B cell (primary cell): ENCODE measurements at regions of chr4 and their contacts with region 1.

Region 1: GRCh38 chr4:55546756-55547465 is at the start of gene CLOCK:
- DNase-seq: peak; percentile 94
- ATAC-seq: peak; percentile 75
- H3K4me3 ChIP-seq: peak within 1 kb of the TSS; percentile 67 to 95 (median 79)
- H3K4me3 Mint-ChIP-seq: peak within 1 kb of the TSS; percentile 97
- H3K27ac ChIP-seq: peak within 1 kb of the TSS; percentile 59 to 84
- H3K27ac Mint-ChIP-seq: peak within 1 kb of the TSS; percentile 96
- H3K4me1 ChIP-seq: peaks cover 6 to 9% of the 10 kb centered on the region in 2 donors
- H3K4me1 Mint-ChIP-seq: peaks cover 31% of the 10 kb centered on the region
- H3K27me3 ChIP-seq: no peaks in the 10 kb centered on the region
- H3K27me3 Mint-ChIP-seq: peaks cover 6% of the 10 kb centered on the region
- CTCF ChIP-seq: peak; percentile 58
- total RNA-seq, gene CLOCK: 14.2 and 15.2 TPM in 2 replicates

Region 2: GRCh38 chr4:54754394-54754793 is 792.5 kb before region 1 on chr4:
- CTCF ChIA-PET with region 1: no interaction called
- POLR2A ChIA-PET with region 1: no interaction called
- intact Hi-C with region 1: no loop called
- DNase-seq: no peak
- ATAC-seq: no peak
- H3K4me3 ChIP-seq: no peak overlapping the region
- H3K4me3 Mint-ChIP-seq: no peak overlapping the region
- H3K27ac ChIP-seq: no peak overlapping the region
- H3K27ac Mint-ChIP-seq: no peak overlapping the region
- H3K4me1 ChIP-seq: no peaks in the 10 kb centered on the region
- H3K4me1 Mint-ChIP-seq: no peaks in the 10 kb centered on the region
- H3K27me3 ChIP-seq: no peaks in the 10 kb centered on the region
- H3K27me3 Mint-ChIP-seq: peaks cover 6% of the 10 kb centered on the region
- CTCF ChIP-seq: no peak

Region 3: GRCh38 chr4:55345980-55346850 is 200.7 kb before region 1 on chr4 and contains the start of gene SRD5A3:
- CTCF ChIA-PET with region 1: interaction called, 7 read pairs
- POLR2A ChIA-PET with region 1: interaction called, 9 read pairs
- intact Hi-C with region 1: loop called (anchors 1 kb)
- DNase-seq: peak; percentile 85
- ATAC-seq: peak; percentile 89
- H3K4me3 ChIP-seq: peak within 1 kb of the TSS; percentile 56 to 84 (median 73)
- H3K4me3 Mint-ChIP-seq: peak within 1 kb of the TSS; percentile 85
- H3K27ac ChIP-seq: peak within 1 kb of the TSS; percentile 69 to 85
- H3K27ac Mint-ChIP-seq: peak within 1 kb of the TSS; percentile 94
- H3K4me1 ChIP-seq: peaks cover 4 to 9% of the 10 kb centered on the region in 2 donors
- H3K4me1 Mint-ChIP-seq: peaks cover 10% of the 10 kb centered on the region
- H3K27me3 ChIP-seq: no peaks in the 10 kb centered on the region
- H3K27me3 Mint-ChIP-seq: no peaks in the 10 kb centered on the region
- CTCF ChIP-seq: peak; percentile 99
- total RNA-seq, gene SRD5A3: 3.6 and 4.0 TPM in 2 replicates

Region 4: DNA sequence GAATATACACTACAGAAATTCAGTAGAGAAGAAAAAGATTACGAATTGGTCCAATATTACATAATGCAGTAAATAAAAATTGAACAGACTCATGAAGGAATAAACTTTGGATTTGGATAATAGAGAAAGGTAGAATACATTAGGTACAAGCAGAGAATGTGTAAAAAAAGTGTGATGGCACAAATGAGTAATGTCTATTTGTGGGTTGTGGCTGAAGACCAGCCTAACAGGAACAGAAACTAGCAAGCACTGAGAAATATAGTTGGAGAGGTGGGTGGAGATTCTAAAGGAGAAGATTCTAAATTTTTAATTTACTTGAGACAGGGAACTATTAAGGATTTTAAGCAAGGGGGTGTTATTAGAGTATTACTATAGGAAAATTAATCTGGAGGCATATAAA is 15.0 kb after region 1 on chr4:
- CTCF ChIA-PET with region 1: interaction called, 4 read pairs
- POLR2A ChIA-PET with region 1: no interaction called
- intact Hi-C with region 1: loop called (anchors 1 kb)
- DNase-seq: peak; percentile 66
- ATAC-seq: peak; percentile 95
- H3K4me3 ChIP-seq: no peak overlapping the region
- H3K4me3 Mint-ChIP-seq: peak overlapping the region; percentile 1
- H3K27ac ChIP-seq: no peak overlapping the region
- H3K27ac Mint-ChIP-seq: peak overlapping the region; percentile 39
- H3K4me1 ChIP-seq: peaks cover 13 to 16% of the 10 kb centered on the region in 2 donors
- H3K4me1 Mint-ChIP-seq: peaks cover 20% of the 10 kb centered on the region
- H3K27me3 ChIP-seq: no peaks in the 10 kb centered on the region
- H3K27me3 Mint-ChIP-seq: peaks cover 4% of the 10 kb centered on the region
- CTCF ChIP-seq: no peak

Region 5: GRCh38 chr4:55866973-55867574 is 320.2 kb after region 1 on chr4:
- CTCF ChIA-PET with region 1: no interaction called
- POLR2A ChIA-PET with region 1: no interaction called
- intact Hi-C with region 1: loop called (anchors 5 kb)
- DNase-seq: peak; percentile 64
- ATAC-seq: peak; percentile 76
- H3K4me3 ChIP-seq: no peak overlapping the region
- H3K4me3 Mint-ChIP-seq: no peak overlapping the region
- H3K27ac ChIP-seq: no peak overlapping the region
- H3K27ac Mint-ChIP-seq: no peak overlapping the region
- H3K4me1 ChIP-seq: peaks cover 0 to 4% of the 10 kb centered on the region in 2 donors
- H3K4me1 Mint-ChIP-seq: peaks cover 4% of the 10 kb centered on the region
- H3K27me3 ChIP-seq: no peaks in the 10 kb centered on the region
- H3K27me3 Mint-ChIP-seq: no peaks in the 10 kb centered on the region
- CTCF ChIP-seq: peak; percentile 96

Region 6: GRCh38 chr4:56907489-56908205 is 1360.7 kb after region 1 on chr4 and contains the start of gene REST:
- CTCF ChIA-PET with region 1: no interaction called
- POLR2A ChIA-PET with region 1: no interaction called
- intact Hi-C with region 1: loop called (anchors 5 kb)
- DNase-seq: peak; percentile 92
- ATAC-seq: peak; percentile 65
- H3K4me3 ChIP-seq: peak within 1 kb of the TSS; percentile 62 to 98 (median 88)
- H3K4me3 Mint-ChIP-seq: peak within 1 kb of the TSS; percentile 93
- H3K27ac ChIP-seq: peak within 1 kb of the TSS; percentile 47 to 77
- H3K27ac Mint-ChIP-seq: peak within 1 kb of the TSS; percentile 92
- H3K4me1 ChIP-seq: peaks cover 29 to 35% of the 10 kb centered on the region in 2 donors
- H3K4me1 Mint-ChIP-seq: peaks cover 42% of the 10 kb centered on the region
- H3K27me3 ChIP-seq: no peaks in the 10 kb centered on the region
- H3K27me3 Mint-ChIP-seq: peaks cover 3% of the 10 kb centered on the region
- CTCF ChIP-seq: no peak
- total RNA-seq, gene REST: 59.4 and 61.1 TPM in 2 replicates